Endothelial cell of umbilical vein (primary cell): ENCODE measurements at regions of chr1 and their contacts with region 1.

Region 1: DNA sequence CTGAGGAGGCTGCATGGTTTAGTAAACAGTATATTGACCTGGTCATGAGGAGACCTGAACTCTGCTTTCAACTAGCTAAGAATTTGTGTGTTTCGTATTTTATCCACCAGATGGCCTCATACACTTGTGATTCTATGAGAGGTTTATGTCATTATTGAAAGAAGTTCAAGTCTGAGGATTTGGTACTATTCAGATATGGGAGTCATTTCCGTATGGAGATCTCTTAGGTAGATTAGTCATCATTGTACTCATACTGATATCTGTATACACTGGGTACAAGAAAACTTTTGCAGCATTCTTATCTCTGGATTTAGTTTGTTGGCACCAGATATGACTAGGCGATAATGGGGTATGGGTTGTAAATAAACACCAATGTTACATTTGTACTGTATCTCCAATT is 26.6 kb downstream of the ATF6 start:
- DNase-seq: peak; percentile 88
- H3K4me3 ChIP-seq: no peak overlapping the region
- H3K27ac ChIP-seq: peak overlapping the region; percentile 2
- H3K4me1 ChIP-seq: peaks cover 14% of the 10 kb centered on the region
- H3K27me3 ChIP-seq: no peaks in the 10 kb centered on the region
- CTCF ChIP-seq: peak; percentile 26 to 39
- POLR2A ChIP-seq: peak; percentile 60

Region 2: DNA sequence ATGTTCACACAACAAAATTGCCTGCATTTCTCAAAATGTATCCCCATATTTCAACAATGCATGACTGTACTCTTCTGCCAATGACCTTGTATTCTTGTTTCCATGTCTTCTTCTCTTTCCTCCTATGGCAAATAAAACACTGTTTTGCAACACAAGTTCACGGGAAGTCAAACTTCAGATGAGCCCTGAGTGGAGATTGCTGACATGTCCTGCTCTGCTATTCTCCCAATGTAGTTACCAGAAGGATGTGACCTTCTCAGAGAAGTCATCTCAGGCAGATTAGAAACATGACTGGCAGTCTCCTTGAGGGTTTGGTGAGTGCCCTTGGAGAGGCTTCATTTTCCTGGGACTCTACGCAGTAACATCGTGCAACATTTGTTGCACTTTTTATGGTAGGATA is 114.2 kb before region 1 on chr1:
- CTCF ChIA-PET with region 1: no interaction called
- POLR2A ChIA-PET with region 1: no interaction called
- dilution Hi-C with region 1: no loop called
- intact Hi-C with region 1: no loop called
- DNase-seq: no peak
- H3K4me3 ChIP-seq: no peak overlapping the region
- H3K27ac ChIP-seq: no peak overlapping the region
- H3K4me1 ChIP-seq: no peaks in the 10 kb centered on the region
- H3K27me3 ChIP-seq: peaks cover 14 to 17% of the 10 kb centered on the region in 2 experiments
- CTCF ChIP-seq: no peak
- POLR2A ChIP-seq: no peak

Region 3: DNA sequence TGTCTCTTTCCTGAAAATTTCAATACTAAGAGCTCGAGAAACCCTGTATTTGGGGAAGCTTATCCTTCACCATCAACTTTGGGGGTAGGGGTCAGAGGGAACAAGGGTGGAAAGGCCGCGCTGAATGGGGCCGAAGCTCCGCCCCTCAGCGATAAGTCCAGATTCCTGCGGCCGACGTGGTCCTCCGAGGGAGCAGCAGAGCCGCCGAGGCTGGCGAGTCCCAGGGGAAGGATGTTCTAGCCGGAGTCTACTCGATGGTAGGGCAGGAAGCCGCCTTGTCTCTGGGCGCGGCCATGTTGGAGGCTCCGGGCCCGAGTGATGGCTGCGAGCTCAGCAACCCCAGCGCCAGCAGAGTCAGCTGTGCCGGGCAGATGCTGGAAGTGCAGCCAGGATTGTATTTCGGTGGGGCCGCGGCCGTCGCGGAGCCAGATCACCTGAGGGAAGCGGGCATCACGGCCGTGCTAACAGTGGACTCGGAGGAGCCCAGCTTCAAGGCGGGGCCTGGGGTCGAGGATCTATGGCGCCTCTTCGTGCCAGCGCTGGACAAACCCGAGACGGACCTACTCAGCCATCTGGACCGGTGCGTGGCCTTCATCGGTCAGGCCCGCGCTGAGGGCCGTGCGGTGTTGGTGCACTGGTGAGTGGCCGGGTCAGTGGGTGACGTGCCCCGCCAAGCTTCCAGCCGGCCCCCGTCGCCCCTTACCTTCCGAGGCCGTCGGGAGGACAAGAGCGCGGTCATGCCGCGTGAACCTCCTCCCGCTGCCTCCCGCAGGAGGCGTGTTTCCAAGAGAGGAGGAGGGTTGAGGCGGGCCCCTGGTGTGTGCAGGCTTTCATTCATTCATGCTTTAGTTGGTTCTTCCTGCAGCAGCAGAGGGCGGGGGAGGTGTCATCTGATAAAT is 43.0 kb before region 1 on chr1 and contains the start of gene DUSP12:
- CTCF ChIA-PET with region 1: interaction called, 11 read pairs
- POLR2A ChIA-PET with region 1: no interaction called
- dilution Hi-C with region 1: no loop called
- intact Hi-C with region 1: no loop called
- DNase-seq: peak; percentile 96
- H3K4me3 ChIP-seq: peak within 1 kb of the TSS; percentile 43 to 77 (median 70)
- H3K27ac ChIP-seq: peak within 1 kb of the TSS; percentile 77
- H3K4me1 ChIP-seq: peaks cover 12% of the 10 kb centered on the region
- H3K27me3 ChIP-seq: peaks cover 0 to 2% of the 10 kb centered on the region in 2 experiments
- CTCF ChIP-seq: no peak
- POLR2A ChIP-seq: peak; percentile 92
- total RNA-seq, gene DUSP12: 26.8 and 28.3 TPM in 2 replicates

Region 4: DNA sequence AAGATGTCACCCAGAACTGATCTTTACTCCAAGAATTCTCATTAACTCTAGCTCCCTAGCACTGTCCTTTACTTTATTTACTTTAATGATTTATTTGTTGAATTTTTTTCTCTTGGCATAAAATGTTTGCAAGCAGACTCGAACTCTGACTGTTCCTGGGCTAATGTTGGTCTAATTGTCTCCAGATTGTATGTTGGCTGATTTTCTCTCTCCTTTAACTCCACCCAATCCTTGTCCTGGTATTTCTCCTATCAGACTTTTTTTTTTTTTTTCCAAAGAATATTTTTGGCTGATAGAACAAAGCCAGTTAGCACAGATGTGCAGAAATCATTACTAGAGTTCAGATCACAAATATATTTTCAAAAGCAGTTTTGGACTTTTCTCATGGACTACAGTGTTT is 55.9 kb after region 1 on chr1:
- CTCF ChIA-PET with region 1: interaction called, 8 read pairs
- POLR2A ChIA-PET with region 1: no interaction called
- dilution Hi-C with region 1: no loop called
- intact Hi-C with region 1: loop called (anchors 5 kb)
- DNase-seq: no peak
- H3K4me3 ChIP-seq: no peak overlapping the region
- H3K27ac ChIP-seq: no peak overlapping the region
- H3K4me1 ChIP-seq: peaks cover 8% of the 10 kb centered on the region
- H3K27me3 ChIP-seq: no peaks in the 10 kb centered on the region
- CTCF ChIP-seq: no peak
- POLR2A ChIP-seq: no peak

Region 5: GRCh38 chr1:161930064-161930463 is 137.3 kb after region 1 on chr1:
- CTCF ChIA-PET with region 1: interaction called, 12 read pairs
- POLR2A ChIA-PET with region 1: no interaction called
- dilution Hi-C with region 1: no loop called
- intact Hi-C with region 1: no loop called
- DNase-seq: peak; percentile 32
- H3K4me3 ChIP-seq: no peak overlapping the region
- H3K27ac ChIP-seq: peak overlapping the region; percentile 28
- H3K4me1 ChIP-seq: peaks cover 11% of the 10 kb centered on the region
- H3K27me3 ChIP-seq: no peaks in the 10 kb centered on the region
- CTCF ChIP-seq: no peak
- POLR2A ChIP-seq: no peak

Region 6: DNA sequence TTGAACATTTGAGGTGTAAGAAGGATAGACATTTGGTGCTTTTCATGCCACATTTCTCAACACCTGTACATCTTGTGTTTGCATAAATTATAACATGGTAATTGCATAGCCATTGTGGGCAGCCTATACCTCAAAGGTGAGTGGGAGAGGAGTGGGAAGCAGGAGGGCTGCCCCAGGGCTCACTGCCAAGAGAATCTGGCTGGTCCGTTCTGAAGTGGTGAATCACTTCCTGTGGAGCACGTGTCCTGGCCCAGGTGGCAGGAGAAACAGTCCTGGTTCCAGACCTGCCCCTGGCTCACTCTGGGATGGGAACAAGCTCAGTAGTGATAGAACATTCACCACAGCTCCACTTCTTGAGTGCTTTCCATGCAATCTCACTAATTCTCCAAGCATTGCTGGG is 242.5 kb after region 1 on chr1:
- CTCF ChIA-PET with region 1: interaction called, 754 read pairs
- POLR2A ChIA-PET with region 1: interaction called, 12 read pairs
- dilution Hi-C with region 1: no loop called
- intact Hi-C with region 1: loop called (anchors 1 kb)
- DNase-seq: peak; percentile 60
- H3K4me3 ChIP-seq: no peak overlapping the region
- H3K27ac ChIP-seq: no peak overlapping the region
- H3K4me1 ChIP-seq: peaks cover 6% of the 10 kb centered on the region
- H3K27me3 ChIP-seq: peaks cover 0 to 13% of the 10 kb centered on the region in 2 experiments
- CTCF ChIP-seq: no peak
- POLR2A ChIP-seq: no peak

Region 7: DNA sequence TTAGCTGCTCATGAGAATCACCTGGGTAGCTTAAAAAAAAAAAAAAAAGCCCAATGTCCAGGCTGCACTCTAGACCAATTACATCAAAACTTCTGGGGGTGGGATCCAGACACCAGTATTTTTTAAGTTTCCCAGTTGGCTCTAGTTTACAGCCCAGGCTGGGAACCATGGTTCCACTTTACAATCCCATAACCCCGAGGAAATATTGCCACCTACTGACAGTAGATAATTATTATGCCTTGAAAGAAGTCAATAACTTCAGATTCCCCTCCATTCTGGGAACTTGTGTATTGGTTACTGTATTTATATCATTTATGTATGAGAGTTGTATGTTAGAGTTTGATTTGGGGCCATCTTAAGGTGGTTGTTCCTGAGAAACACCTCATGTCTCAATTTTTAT is 483.8 kb after region 1 on chr1:
- CTCF ChIA-PET with region 1: interaction called, 3 read pairs
- POLR2A ChIA-PET with region 1: no interaction called
- dilution Hi-C with region 1: no loop called
- intact Hi-C with region 1: loop called (anchors 2 kb)
- DNase-seq: peak; percentile 51
- H3K4me3 ChIP-seq: no peak overlapping the region
- H3K27ac ChIP-seq: no peak overlapping the region
- H3K4me1 ChIP-seq: no peaks in the 10 kb centered on the region
- H3K27me3 ChIP-seq: no peaks in the 10 kb centered on the region
- CTCF ChIP-seq: peak; percentile 10 to 22
- POLR2A ChIP-seq: no peak